Dorsolateral prefrontal cortex (tissue), 120 donors: ENCODE measurements at regions of chr11 and their contacts with region 1.

Region 1: DNA sequence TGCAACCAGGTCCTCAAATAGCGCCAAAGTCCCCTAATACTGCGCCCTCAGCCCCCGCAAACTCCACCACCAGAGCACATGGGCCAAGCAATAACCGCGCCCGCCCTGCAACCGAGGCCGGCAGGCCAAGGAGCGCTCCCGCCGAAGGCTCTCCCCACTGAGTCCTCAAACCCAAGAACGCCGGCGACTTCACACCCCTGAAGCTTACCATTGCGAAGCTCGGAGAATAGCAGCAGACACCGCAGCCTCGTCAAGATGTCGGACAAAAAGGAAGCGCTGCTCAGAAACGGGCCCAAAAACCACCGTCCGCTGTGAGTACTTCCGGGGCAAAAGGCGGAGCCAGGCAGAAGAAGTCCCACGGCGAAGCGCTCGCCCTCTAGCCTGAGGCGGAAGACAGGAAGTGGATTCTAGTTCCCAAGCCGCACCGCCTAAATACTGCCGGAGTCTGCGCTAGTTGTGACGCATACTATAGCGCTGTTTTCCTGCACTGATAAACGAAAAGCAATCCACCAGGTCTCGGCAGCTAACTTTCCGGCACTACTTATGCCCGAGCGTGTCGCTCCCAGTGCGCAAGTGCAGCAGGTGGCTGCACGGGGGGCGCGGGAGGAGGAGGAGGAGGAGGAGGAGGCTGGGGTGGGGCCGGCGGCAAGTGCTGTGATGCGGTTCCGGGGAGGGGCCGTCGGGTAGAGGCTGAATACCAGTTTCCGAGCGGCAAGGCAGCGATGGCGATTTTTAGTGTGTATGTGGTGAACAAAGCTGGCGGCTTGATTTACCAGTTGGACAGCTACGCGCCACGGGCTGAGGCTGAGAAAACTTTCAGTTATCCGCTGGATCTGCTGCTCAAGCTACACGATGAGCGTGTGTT is at the starts of genes RPS25 and TRAPPC4:
- DNase-seq: peak; percentile 92 to 99 (median 98)
- H3K4me3 ChIP-seq: peak within 1 kb of the TSS; percentile 61 to 100 (median 93)
- H3K27ac ChIP-seq: peak within 1 kb of the TSS; percentile 79 to 99 (median 94)
- H3K27me3 ChIP-seq: no peaks in the 10 kb centered on the region
- CTCF ChIP-seq: peak in 46 of 56 donors; percentile 6 to 70 (median 43)
- total RNA-seq, gene RPS25: 267 to 575 (median 429) TPM
- total RNA-seq, gene TRAPPC4: 29.3 to 71.5 (median 49.7) TPM

Region 2: DNA sequence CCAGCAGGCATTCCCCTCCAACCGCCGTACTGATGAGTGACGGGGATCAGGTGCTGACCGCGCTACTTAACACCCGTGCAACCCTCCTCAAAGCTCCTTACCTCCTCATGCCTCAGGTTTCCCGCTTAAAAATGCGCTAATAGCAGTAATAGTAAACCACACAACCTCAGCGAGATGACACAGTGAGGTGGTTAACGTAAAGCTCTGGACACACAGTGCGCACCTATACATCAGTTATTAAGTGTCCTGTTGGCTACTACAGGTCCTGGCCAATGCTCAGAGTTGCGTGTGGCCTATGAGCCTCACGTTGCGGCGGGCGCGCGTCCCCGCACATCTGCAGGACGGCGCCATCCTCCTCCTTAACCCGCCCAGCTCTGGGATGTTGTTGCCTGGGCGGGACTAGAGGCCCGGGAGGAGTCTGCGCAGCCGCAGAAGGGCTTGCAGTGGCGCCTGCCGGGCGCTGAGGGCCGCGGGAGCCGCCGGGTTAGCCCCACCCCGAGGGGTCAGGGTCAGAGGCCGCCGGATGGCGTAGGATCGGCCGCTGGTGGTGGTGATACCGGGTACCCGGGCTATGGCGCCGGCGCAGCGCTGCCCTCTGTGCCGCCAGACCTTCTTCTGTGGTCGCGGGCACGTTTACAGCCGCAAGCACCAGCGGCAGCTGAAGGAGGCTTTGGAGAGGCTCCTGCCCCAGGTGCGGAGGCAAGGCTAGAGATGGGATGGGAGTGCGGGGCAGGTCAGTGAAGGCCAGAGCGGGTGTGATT is 20.5 kb before region 1 on chr11 and contains the start of gene CENATAC:
- intact Hi-C with region 1: loop called (anchors 1 kb)
- DNase-seq: peak; percentile 94 to 99 (median 96)
- H3K4me3 ChIP-seq: peak within 1 kb of the TSS; percentile 64 to 100 (median 95)
- H3K27ac ChIP-seq: peak within 1 kb of the TSS in 58 of 59 donors; percentile 4 to 93 (median 82)
- H3K27me3 ChIP-seq: no peaks in the 10 kb centered on the region
- CTCF ChIP-seq: peak in 45 of 56 donors; percentile 10 to 67 (median 43)
- total RNA-seq, gene CENATAC: 37.7 to 109 (median 64.9) TPM

Region 3: DNA sequence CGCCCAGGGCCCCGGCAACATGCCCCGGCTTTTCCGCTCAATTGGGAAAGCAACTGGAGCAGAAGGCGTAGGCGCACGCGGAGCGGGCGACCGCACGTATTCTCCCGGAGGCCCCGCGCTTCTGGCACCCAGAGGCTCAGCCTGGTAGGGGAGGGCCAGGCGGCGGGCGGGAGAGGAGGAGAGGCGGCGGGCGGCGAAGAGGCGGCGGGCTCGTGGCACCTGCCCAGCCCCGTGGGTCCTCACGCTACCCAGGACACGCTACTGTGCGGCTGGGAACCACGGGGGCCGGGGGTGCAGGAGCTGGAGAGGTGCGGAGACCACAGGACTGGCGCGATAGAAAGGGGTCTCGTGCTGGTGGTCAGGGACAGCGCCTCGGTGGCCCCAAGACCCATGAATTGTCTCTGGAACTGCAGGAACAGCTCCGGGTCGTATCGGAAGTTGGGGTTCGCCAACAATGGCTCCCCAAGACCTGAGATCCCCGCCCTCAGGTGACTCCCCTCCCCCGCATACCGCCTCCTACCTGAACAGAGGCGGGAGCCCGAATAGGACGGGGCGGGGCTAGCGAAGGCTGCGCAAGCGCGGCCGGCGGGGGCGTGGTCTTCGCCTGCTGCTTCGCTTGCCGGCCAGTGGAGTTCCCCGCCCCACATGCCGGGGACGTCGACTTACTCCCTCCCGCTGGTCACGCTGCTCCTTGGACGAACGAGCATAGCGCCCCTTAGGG is 12.2 kb after region 1 on chr11 and contains the start of gene SLC37A4:
- intact Hi-C with region 1: loop called (anchors 1 kb)
- DNase-seq: peak; percentile 97 to 99 (median 98)
- H3K4me3 ChIP-seq: peak within 1 kb of the TSS; percentile 56 to 98 (median 88)
- H3K27ac ChIP-seq: peak within 1 kb of the TSS; percentile 19 to 95 (median 85)
- H3K27me3 ChIP-seq: no peaks in the 10 kb centered on the region
- CTCF ChIP-seq: peak in 47 of 56 donors; percentile 72 to 97 (median 90)
- total RNA-seq, gene SLC37A4: 6.9 to 20.8 (median 12.6) TPM

Region 4: DNA sequence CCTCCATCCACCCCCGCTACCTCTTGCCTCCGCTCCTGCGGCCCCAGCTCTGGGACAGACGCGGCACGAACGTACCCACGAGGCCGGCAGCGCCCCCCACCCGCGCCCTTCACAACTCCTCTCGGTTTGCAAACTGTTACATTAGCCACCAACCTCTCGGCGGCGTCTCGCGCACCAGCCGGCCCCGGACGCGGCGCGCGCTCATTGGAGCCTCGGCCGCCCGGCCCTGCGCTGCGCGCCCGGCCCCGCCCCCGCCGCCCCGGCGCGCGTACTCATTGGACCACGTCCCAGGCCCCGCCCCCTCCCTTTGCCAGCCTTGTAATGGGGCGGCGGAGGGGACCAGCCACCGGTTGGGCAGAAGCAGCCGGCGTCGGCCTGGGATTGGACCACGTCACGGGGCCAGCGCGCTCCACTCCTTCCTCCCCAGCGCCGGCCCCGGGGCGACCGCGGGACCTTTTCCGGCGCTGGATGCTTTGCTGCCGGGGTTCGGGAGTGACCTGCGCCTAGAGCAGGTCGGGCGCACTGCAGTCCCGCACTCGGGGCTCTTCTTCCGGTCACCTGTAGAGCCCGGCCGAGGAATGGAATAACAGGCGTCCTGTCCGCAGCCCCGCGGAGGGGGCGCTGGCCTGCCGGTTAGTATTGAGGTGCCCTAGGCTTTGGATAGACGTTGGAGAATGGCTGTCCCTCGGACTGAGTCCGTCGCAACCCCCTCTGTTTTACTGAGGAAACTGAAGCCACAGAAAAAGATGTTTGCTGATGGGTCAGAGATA is 38.9 kb after region 1 on chr11 and contains the start of gene HYOU1:
- intact Hi-C with region 1: loop called (anchors 1 to 5 kb)
- DNase-seq: peak; percentile 95 to 98 (median 96)
- H3K4me3 ChIP-seq: peak within 1 kb of the TSS; percentile 69 to 100 (median 94)
- H3K27ac ChIP-seq: peak within 1 kb of the TSS in 58 of 59 donors; percentile 14 to 95 (median 84)
- H3K27me3 ChIP-seq: no peaks in the 10 kb centered on the region
- CTCF ChIP-seq: peak in 33 of 56 donors; percentile 2 to 59 (median 28)
- total RNA-seq, gene HYOU1: 94.9 to 199 (median 139) TPM